Spleen (tissue), 13 donors: ENCODE measurements at regions of chr21 and their contacts with region 1.

Region 1: GRCh38 chr21:40143822-40144525 is 276.7 kb downstream of the PCP4 start:
- DNase-seq: no peak
- H3K4me3 ChIP-seq: no peak overlapping the region
- H3K27ac ChIP-seq: no peak overlapping the region
- H3K4me1 ChIP-seq: no peaks in the 10 kb centered on the region
- H3K27me3 ChIP-seq: no peaks in the 10 kb centered on the region
- CTCF ChIP-seq: peak in 10 of 11 experiments; percentile 13 to 81 (median 59)
- POLR2A ChIP-seq: no peak

Region 2: GRCh38 chr21:40385892-40386599 is 242.1 kb after region 1 on chr21:
- intact Hi-C with region 1: loop called (anchors 10 kb)
- DNase-seq: peak; percentile 77
- H3K4me3 ChIP-seq: no peak overlapping the region
- H3K27ac ChIP-seq: no peak overlapping the region
- H3K4me1 ChIP-seq: peaks cover 0 to 5% (median 0%) of the 10 kb centered on the region in 6 donors
- H3K27me3 ChIP-seq: peaks cover 0 to 13% (median 0%) of the 10 kb centered on the region in 7 donors
- CTCF ChIP-seq: peak in 9 of 11 experiments; percentile 16 to 79 (median 65)
- POLR2A ChIP-seq: no peak

Region 3: DNA sequence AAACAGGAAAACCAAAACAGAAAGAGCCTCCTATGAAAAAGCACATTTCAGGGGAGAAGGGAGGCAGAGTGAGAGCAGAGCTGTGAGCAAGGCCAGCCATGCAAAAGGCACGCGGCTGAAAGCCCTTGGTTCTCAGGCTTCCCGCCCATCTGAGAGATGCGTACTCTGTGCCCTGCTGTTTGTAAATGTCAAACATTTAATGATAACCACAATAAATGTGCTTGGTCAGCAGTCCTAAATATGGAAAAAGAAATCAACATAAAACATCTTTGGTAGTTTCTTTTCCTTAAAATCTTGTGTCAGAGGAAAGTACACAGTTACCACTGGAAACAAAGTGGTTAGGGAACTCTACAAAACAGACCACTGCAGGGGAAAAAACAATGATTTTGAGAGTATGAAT is 419.9 kb after region 1 on chr21:
- intact Hi-C with region 1: no loop called
- DNase-seq: no peak
- H3K4me3 ChIP-seq: no peak overlapping the region
- H3K27ac ChIP-seq: peak overlapping the region in 3 of 8 donors; percentile 57 to 80 (median 63)
- H3K4me1 ChIP-seq: no peaks in the 10 kb centered on the region
- H3K27me3 ChIP-seq: no peaks in the 10 kb centered on the region
- CTCF ChIP-seq: no peak
- POLR2A ChIP-seq: no peak